ENCODE measurements at regions of chr22 and their contacts with region 1.

Region 1: DNA sequence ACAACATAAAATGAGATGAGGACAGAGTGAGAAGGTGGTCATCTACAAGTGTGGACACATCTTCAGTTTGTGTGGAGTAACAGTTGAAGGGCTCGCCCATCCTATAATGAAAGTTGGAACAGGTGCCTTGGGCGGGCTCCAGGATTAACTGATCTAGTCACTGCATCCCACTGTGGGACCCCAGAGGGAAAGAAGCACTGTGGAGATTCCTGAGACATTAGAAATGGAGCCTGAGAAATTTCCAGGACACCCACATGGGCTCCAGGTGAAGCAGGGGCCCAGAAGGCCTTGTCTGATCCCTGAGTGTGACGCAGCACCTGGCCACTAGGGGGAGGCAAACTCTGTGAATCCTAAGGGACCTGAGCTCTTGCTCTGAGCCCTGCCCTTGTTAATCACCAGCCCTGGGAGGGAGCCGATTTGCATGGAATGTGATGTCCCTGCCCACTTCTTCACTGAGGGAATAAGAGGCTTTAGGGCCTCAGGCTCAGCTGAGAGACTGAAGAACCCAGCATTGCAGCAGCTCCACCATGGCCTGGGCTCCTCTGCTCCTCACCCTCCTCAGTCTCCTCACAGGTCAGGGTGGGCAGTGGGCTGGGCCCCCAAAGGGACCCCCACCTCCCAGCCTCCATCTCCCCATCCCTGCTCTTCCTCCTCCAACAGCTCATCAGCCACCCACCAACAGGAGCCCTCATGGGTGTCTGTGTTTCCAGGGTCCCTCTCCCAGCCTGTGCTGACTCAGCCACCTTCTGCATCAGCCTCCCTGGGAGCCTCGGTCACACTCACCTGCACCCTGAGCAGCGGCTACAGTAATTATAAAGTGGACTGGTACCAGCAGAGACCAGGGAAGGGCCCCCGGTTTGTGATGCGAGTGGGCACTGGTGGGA is 98.4 kb downstream of the VPREB1 start:
- DNase-seq: no peak
- H3K4me3 ChIP-seq: no peak overlapping the region
- H3K27me3 ChIP-seq: peaks cover 6% of the 10 kb centered on the region
- CTCF ChIP-seq: peak; percentile 91

Region 2: DNA sequence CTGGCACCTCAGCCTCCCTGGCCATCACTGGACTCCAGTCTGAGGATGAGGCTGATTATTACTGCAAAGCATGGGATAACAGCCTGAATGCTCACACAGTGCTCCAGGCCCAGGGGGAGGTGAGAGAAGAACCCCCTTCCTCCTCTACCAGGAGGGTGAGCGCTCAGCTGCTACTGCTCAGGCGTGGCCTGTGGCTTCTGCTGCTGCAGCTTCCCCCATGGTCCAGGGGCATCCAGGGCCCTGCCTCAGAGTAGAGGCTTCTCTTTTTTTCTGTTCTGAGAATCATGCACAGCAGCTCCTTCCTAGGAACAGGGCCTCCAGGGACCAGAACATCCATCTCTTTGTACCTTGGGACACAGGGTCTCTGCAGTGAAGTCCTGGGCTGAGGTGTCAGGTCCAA is 15.2 kb before region 1 on chr22:
- CTCF ChIA-PET with region 1: interaction called, 29 read pairs
- POLR2A ChIA-PET with region 1: no interaction called
- DNase-seq: no peak
- H3K4me3 ChIP-seq: no peak overlapping the region
- H3K27me3 ChIP-seq: peaks cover 2% of the 10 kb centered on the region; the same call in 1 of the 2 replicates
- CTCF ChIP-seq: no peak

Region 3: DNA sequence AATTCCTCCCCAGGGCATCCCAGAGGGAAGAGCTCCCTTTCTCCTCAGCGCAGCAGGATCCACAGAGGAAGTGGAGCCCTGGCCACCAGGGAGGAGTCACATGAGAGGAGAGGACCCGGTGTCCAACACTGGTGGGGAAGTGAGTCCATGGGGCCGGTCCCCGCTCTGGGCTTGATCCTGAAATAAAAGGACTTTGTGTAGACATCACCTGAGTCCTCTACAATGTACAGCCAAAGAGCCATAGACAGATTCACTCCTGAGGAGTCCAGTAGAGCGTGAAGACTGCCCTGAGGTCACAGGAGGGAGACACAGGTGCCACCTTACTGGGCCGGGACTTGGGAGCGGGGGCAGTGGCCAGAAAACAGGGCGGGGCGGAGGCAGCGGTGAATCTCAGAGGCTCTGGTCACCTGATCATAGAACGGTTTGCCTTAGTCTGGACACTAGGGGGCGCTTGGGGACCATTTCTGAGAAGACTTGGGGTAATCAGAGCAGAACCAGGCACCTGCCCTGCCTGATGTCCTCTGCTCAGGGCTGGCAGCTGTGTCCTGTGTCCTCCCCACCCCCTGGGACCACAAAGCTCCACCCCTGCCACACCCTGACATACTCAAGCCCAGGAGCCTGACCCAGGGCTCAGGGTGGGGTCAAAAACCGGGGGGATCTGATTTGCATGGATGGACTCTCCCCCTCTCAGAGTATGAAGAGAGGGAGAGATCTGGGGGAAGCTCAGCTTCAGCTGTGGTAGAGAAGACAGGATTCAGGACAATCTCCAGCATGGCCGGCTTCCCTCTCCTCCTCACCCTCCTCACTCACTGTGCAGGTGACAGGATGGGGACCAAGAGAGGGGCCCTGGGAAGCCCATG is 14.3 kb after region 1 on chr22:
- CTCF ChIA-PET with region 1: interaction called, 22 read pairs
- POLR2A ChIA-PET with region 1: no interaction called
- DNase-seq: no peak
- H3K4me3 ChIP-seq: no peak overlapping the region
- H3K27me3 ChIP-seq: peaks cover 3% of the 10 kb centered on the region
- CTCF ChIP-seq: peak; percentile 74